ENCODE measurements at regions of chr6 and their contacts with region 1.

Region 1: DNA sequence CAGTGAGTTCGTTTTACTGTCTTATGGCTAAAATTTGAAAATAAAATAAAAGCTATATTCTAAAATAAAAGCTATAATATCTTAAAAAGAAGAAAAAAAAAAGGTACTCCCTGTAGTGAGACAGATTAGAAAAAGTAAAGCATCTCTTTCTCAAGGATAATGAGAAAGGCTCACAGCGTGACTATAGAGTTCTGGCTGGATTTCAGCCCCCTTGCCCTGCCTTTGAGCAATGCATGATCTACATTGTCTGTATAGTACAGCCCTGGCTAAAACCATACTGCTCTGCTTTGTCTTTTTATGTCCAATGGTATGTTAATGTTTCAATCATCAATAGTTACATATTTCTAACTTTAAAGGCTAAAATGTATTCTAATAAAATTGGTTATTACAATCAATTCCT is 91.2 kb downstream of the PRSS35 start:
- DNase-seq: no peak

Region 2: GRCh38 chr6:83574787-83575186 is 28.8 kb before region 1 on chr6:
- CTCF ChIA-PET with region 1: no interaction called
- POLR2A ChIA-PET with region 1: no interaction called
- DNase-seq: no peak

Region 3: DNA sequence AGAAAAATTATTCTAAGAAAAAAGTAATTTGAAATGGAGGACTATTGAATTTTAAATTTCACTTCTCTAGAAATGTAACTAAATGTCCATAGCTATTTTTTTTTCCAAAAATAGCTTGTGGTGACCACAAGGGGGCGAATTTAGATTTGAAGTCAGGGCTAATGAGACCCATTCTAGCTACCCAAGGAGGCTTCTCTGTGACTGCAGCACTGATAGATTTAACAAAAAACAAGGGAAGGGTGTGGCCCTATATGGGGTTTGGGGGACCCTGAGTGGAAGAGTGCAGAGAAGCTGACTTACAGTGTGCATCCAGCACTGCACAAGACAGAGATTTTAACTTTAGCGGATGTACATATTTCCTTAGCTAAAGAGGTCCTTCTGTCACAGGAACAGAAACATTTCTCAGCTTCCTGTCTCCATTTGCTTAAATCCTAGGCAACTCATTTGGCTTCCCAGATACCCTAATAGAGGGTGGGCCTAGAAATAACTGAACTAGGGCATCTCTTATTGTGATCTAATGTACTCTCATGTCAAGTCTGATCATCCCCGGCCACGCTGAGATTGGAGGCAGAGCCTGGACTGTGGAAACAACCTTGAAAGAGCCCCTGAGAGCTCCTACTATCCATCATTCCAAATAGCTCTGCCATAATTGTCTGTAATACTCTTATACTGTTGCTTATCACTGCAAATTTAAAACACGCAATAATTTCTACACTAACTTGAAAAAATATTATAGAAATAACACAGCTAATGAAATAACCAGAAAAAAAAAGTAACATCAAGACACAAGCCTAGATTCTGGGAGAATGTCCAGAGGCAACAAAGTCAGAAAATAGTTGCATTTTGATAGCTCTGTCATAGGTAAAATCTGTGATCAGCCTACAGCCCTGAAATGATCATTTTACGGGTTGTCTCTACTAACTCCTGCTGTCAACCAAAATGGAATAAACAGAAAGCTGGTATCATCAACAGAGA is 11.8 kb after region 1 on chr6:
- CTCF ChIA-PET with region 1: interaction called, 13 read pairs
- POLR2A ChIA-PET with region 1: no interaction called
- DNase-seq: peak; percentile 31

Region 4: DNA sequence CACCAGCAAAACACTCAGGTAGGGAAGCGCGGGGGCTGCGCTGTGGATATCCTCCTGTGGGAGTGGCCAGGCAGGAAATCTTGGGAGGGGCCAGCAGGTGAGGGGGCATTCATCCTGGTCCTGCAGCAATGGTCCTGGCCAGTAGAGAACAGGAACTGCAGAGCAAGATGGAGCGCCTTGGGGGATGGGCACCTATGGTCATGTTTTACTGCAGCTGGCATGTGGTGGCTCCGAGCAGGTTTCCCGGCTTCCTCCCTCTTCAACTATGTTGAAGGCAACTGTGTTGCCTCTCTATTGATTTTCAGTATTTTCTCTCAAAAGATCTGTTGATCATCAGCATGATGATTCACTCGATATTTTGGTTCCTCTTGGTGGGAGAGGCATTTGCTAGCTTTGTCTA is 34.4 kb after region 1 on chr6:
- CTCF ChIA-PET with region 1: no interaction called
- POLR2A ChIA-PET with region 1: no interaction called
- DNase-seq: no peak

Measured in HEK293T (cell line).